ENCODE measurements at regions of chr9 and their contacts with region 1.

Region 1: DNA sequence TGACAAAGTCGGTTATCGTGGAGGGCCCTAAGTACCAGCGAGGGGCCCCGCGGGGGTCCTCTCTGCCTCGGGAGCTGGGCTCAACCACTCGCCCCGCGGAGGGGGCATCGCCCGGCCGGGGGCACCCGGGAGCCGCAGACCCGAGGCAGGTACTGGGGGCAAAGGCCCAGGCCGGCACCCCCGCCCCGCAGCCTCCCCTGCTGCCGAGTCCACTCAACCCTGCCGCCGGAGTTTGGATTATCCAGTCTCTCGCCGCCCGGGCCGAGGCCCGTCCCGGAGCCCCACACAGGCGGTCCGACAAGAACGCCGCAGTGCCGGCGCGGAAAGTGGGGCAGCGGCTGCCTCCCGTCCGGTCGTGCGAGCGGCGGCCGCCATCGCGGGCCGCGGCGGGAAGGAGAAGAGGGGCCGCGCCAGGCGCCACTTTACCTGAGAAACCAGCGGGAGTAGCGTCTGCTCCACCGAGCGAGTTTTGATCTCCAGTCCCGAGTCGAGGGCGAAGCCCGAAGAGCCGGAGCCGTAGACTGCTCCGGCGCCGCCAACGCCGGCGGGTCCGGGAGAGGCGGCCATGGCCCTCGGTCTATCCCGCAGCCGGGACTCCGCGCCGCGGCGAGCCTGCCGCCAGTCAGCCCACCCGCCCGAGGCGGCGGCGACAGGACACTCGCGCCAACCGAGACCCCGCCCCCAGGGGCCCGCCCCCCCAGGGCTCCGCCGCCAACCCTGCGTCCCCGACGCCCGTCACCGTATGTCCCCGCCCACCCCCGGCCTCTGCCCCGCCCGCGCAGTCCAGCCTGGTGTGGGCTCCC is at the start of gene CTNNAL1:
- DNase-seq: peak; percentile 91
- H3K4me3 Mint-ChIP-seq: peak within 1 kb of the TSS; percentile 86
- H3K27ac Mint-ChIP-seq: peak within 1 kb of the TSS; percentile 68
- H3K4me1 Mint-ChIP-seq: peaks cover 25% of the 10 kb centered on the region
- H3K27me3 Mint-ChIP-seq: peaks cover 2% of the 10 kb centered on the region
- total RNA-seq, gene CTNNAL1: 23.2 to 25.9 TPM

Region 2: GRCh38 chr9:108885643-108886348 is 127.3 kb before region 1 on chr9:
- CTCF ChIA-PET with region 1: no interaction called
- POLR2A ChIA-PET with region 1: no interaction called
- intact Hi-C with region 1: loop called (anchors 2 kb)
- DNase-seq: peak; percentile 73
- H3K4me3 Mint-ChIP-seq: no peak overlapping the region
- H3K27ac Mint-ChIP-seq: peak overlapping the region; percentile 44
- H3K4me1 Mint-ChIP-seq: peaks cover 17% of the 10 kb centered on the region
- H3K27me3 Mint-ChIP-seq: no peaks in the 10 kb centered on the region

Region 3: GRCh38 chr9:108933718-108934322 is 79.3 kb before region 1 on chr9 and contains the start of gene ELP1:
- CTCF ChIA-PET with region 1: no interaction called
- POLR2A ChIA-PET with region 1: no interaction called
- intact Hi-C with region 1: loop called (anchors 1 kb)
- DNase-seq: peak; percentile 95
- H3K4me3 Mint-ChIP-seq: peak within 1 kb of the TSS; percentile 95
- H3K27ac Mint-ChIP-seq: peak within 1 kb of the TSS; percentile 92
- H3K4me1 Mint-ChIP-seq: peaks cover 25% of the 10 kb centered on the region
- H3K27me3 Mint-ChIP-seq: no peaks in the 10 kb centered on the region
- total RNA-seq, gene ELP1: 25.5 to 29.2 TPM

Region 4: GRCh38 chr9:109052416-109052815 is 39.3 kb after region 1 on chr9:
- CTCF ChIA-PET with region 1: no interaction called
- POLR2A ChIA-PET with region 1: no interaction called
- intact Hi-C with region 1: no loop called
- DNase-seq: no peak
- H3K4me3 Mint-ChIP-seq: no peak overlapping the region
- H3K27ac Mint-ChIP-seq: no peak overlapping the region
- H3K4me1 Mint-ChIP-seq: peaks cover under 1% of the 10 kb centered on the region
- H3K27me3 Mint-ChIP-seq: no peaks in the 10 kb centered on the region

Region 5: GRCh38 chr9:109101810-109102209 is 88.7 kb after region 1 on chr9:
- CTCF ChIA-PET with region 1: no interaction called
- POLR2A ChIA-PET with region 1: no interaction called
- intact Hi-C with region 1: loop called (anchors 1 kb)
- DNase-seq: no peak
- H3K4me3 Mint-ChIP-seq: peak overlapping the region; percentile 38
- H3K27ac Mint-ChIP-seq: peak overlapping the region; percentile 76
- H3K4me1 Mint-ChIP-seq: peaks cover 66% of the 10 kb centered on the region
- H3K27me3 Mint-ChIP-seq: no peaks in the 10 kb centered on the region

Region 6: DNA sequence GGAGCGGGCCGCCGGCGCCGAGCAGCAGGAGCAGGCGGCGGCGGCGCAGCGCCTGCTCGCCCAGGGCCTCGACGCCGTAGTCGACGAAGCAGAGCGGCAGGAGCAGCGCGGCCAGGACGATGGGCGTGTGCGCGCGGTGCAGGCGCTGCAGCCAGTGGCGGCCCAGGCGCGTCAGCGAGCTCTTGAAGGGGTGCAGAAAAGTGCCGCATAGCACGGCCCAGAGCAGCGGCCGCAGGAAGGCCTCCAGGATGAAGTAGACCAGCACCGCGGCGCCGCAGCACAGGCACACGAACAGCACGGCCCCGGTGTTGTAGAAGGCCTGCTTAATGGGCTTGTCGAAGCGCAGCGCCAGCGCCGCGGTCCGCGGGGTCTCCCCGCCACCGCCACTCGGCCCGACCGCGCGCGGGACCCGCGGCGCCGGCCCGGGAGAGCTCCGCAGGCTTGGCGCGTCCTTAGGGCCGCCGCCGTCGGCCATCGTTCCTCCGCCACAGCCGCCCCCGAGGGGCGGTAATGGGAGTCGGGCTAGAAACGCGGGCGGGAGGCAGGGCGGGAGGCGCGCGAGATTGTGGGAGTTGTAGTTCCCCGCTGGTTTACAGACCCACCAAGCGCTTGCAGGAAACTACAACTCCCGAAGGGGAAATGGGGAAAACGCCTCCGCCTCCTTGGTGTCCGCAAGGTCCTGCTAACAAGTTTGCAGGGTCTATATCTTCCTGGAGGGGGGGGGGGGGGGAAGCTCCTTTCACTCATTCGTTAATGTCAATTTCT is 106.5 kb after region 1 on chr9 and contains the start of gene TMEM245:
- CTCF ChIA-PET with region 1: no interaction called
- POLR2A ChIA-PET with region 1: interaction called, 4 read pairs
- intact Hi-C with region 1: loop called (anchors 1 kb)
- DNase-seq: peak; percentile 97
- H3K4me3 Mint-ChIP-seq: peak within 1 kb of the TSS; percentile 88
- H3K27ac Mint-ChIP-seq: peak within 1 kb of the TSS; percentile 86
- H3K4me1 Mint-ChIP-seq: peaks cover 38% of the 10 kb centered on the region
- H3K27me3 Mint-ChIP-seq: no peaks in the 10 kb centered on the region
- total RNA-seq, gene TMEM245: 23.0 TPM

Region 7: GRCh38 chr9:109182940-109183798 is 170.1 kb after region 1 on chr9:
- CTCF ChIA-PET with region 1: interaction called, 3 read pairs
- POLR2A ChIA-PET with region 1: no interaction called
- intact Hi-C with region 1: loop called (anchors 2 kb)
- DNase-seq: peak; percentile 24
- H3K4me3 Mint-ChIP-seq: no peak overlapping the region
- H3K27ac Mint-ChIP-seq: no peak overlapping the region
- H3K4me1 Mint-ChIP-seq: peaks cover 11% of the 10 kb centered on the region
- H3K27me3 Mint-ChIP-seq: peaks cover 7% of the 10 kb centered on the region

Region 8: DNA sequence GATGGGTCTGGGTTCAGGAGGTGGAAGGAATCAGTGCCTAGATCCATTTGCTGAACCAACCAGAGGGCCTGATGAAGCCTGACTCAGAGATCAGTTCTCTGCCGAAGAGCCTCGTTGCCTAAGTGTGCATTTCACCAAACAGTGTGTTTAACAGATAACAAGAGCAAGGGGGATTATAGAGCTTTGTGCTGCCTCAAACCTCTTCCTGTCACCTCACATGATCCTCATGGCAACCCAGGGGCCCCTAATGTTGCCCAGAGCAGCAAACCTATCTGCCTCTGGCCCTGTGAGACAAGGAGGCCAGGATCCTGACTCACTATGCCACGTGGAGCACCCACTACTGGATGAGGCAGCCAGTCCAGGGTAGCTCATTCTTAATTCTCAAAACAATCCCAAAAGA is 374.1 kb after region 1 on chr9:
- CTCF ChIA-PET with region 1: no interaction called
- POLR2A ChIA-PET with region 1: no interaction called
- intact Hi-C with region 1: no loop called
- DNase-seq: no peak
- H3K4me3 Mint-ChIP-seq: no peak overlapping the region
- H3K27ac Mint-ChIP-seq: no peak overlapping the region
- H3K4me1 Mint-ChIP-seq: no peaks in the 10 kb centered on the region
- H3K27me3 Mint-ChIP-seq: peaks cover 16% of the 10 kb centered on the region